ENCODE measurements at regions of chr16 and their contacts with region 1.

Region 1: GRCh38 chr16:4802659-4803287 is 340 bp upstream of the ROGDI start:
- DNase-seq: peak; percentile 96
- H3K4me3 ChIP-seq: peak overlapping the region; percentile 55 to 86 (median 74)
- H3K27ac ChIP-seq: peak overlapping the region; percentile 86 to 92 (median 88)
- H3K4me1 ChIP-seq: peaks cover 0 to 41% (median 35%) of the 10 kb centered on the region in 4 donors
- H3K27me3 ChIP-seq: no peaks in the 10 kb centered on the region
- CTCF ChIP-seq: no peak
- EP300 ChIP-seq: no peak
- POLR2A ChIP-seq: no peak

Region 2: GRCh38 chr16:4762205-4762604 is 40.6 kb before region 1 on chr16:
- intact Hi-C with region 1: no loop called
- DNase-seq: no peak
- H3K4me3 ChIP-seq: no peak overlapping the region
- H3K27ac ChIP-seq: no peak overlapping the region
- H3K4me1 ChIP-seq: peaks cover 0 to 24% (median 20%) of the 10 kb centered on the region in 4 donors
- H3K27me3 ChIP-seq: no peaks in the 10 kb centered on the region
- CTCF ChIP-seq: no peak
- EP300 ChIP-seq: no peak
- POLR2A ChIP-seq: no peak

Region 3: DNA sequence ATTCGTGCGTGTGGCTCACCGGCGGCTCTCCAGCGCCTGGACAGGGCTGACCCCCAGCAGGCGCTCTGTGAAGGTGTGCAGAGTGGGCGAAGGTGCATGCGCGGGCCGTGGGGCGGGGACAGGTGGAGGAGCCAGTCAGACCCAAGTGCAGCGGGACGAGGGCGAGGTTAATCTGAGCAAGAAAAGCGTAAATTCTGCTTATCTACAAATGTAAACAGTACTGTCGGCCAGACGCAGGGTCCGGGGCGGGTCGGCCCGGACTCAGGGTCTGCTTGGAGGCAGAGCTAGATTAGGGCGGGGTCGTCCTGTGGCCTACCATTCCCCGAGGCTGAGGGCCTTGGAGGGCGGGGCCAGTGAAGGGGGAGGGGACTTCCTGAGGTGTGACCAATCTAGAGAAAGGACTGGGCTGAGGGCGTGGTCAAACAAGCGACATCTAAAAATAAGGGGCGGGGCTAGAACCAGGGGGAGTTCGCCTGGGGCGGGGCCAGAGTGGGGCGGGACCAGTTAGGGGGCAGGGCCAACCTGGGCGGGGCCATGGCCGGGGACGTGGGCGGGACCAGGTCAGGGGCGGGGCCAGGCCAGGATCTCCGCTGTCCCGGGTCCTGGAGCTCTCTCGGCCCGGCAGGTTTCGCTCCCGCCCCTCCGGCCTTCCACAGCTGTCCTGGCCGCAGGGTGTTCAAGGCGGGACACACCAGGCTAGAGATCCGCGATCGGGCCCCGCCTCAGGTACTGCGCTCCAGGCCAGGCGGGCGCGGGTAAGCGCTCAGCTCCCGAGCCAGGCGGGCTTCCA is 155.1 kb after region 1 on chr16 and contains the start of gene SEC14L5:
- intact Hi-C with region 1: loop called (anchors 2 kb)
- DNase-seq: peak; percentile 98
- H3K4me3 ChIP-seq: peak within 1 kb of the TSS; percentile 28 to 58 (median 50)
- H3K27ac ChIP-seq: peak within 1 kb of the TSS; percentile 70 to 77 (median 74)
- H3K4me1 ChIP-seq: peaks cover 0 to 27% (median 18%) of the 10 kb centered on the region in 4 donors
- H3K27me3 ChIP-seq: no peaks in the 10 kb centered on the region
- CTCF ChIP-seq: no peak
- EP300 ChIP-seq: no peak
- POLR2A ChIP-seq: peak in 1 of 2 donors; percentile 60
- total RNA-seq, gene SEC14L5: 0.28 to 2.5 (median 0.65) TPM